Sciatic nerve (tissue), 2 donors: ENCODE measurements at regions of chr1 and their contacts with region 1.

Region 1: DNA sequence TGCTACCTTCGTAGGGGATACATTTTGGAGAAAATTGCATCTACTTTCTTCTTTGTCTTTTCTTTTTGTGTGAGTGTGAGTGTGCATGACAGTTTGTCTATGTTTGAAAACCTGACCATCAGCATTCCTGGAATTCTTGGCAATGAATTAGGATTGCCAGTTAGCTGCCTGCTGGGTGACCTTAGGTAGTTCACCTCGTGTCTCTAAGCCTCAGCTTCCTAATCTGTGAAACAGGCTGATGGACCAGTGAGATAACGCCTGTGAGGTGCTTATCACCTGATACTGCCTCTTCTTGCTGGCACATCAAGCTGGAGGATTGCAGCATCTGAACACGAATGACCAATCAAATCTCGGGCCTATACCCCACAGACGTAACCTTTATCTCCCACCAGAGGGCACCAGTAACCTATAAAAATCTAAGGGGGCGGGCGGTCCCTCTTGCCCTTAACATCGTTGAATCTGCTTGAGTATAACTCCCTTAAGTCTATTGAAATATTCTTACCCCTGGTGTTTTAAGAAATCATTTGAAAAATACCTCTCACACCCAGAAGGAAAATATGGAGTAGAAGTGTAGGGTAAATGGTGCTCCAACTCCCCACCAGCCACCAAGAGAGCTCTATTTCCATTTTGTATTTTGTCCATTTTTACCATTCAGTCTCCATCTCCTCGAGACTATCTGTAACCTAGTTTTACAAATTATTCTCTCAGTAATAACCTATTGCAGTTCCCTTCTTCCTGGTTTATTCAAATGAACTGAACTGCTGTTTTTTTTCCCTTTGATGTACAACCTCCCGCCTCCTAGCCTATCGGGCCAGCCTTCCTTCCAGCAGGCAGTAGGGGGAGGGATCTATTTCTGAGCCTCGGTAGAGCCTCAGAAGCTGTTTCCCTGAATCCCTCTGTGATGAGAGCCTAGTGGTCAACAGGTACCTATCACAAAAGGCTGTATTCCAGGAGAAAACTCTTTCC is 49.7 kb downstream of the MDM4 start:
- DNase-seq: no peak
- ATAC-seq: peak; percentile 91

Region 2: DNA sequence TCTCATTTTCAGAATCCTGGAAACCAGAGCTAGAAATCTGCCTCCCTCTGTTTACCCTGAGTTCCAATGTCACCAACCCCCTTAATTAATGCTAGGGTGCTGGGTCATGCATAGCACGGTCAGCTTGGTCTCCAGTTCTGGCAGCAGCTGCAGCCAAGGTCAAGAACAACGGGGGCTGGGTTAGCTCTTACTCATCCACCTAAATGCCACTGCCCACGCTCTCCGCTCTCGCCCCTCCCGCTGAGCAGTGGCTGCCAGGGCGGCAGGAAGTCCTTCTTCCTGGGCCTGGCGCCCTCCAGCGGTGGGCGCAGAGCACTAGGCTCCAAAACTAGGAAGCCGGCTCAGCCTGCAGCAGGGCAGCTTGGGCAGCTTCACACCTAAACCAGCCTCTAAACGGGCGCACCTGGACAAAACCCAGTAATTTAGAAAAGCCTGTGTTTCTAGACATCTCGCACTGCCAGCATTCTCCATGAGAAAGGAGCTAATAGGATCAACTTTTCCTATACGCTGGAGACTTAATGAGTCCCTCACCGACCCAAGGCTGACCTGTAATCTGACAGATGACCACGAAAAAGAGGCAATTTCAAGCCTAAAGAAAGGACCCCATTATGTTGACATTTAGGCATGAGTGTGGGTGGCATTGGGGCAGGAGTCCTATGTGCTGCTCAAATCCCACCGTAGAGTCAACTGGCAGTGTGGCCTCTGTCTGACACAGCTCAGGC is 198.0 kb after region 1 on chr1:
- intact Hi-C with region 1: loop called (anchors 5 kb)
- DNase-seq: peak; percentile 85
- ATAC-seq: peak; percentile 86